ENCODE measurements at regions of chr16 and their contacts with region 1.

Region 1: DNA sequence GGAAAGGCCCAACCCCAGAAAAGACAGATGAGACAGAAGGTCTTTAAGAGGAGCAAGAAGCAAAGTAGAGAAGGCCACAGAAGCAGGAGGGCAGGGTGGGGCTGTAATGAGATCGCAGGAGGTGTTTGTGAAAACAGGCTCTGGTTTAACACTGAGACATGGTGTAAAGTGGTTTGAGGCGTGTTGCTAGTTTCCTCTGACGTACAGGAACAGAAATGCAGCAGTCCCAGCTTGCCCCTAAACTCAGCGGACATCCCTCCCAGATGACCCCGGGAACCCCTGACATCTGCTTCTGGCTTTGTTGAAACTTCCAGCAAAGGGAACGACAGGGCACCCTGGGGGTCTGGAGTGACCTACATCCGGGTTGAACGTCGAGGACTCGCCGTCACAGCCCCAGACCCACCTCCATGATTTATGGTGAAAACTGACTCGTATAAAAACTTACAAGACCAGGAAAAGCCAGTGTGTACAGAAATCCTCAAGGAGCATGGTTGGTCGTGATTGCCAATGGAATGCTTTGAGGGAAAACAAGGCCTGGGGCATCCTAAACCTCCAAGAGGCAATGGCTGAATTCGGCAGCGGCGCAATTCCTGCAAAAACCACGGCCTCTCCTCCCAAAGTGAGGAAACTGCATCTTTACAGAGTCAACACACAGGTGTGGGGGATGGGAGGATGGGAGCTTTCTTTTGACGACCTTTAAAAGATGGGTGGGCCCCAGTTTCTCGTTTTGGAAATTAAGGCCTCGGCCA is 25.8 kb downstream of the LITAF start:
- DNase-seq: peak; percentile 72 to 94
- ATAC-seq: peak; percentile 72 to 91 (median 80)
- H3K4me3 ChIP-seq: peak overlapping the region; percentile 68
- H3K4me3 Mint-ChIP-seq: peak overlapping the region; percentile 97
- H3K27ac ChIP-seq: peak overlapping the region; percentile 100
- H3K27ac Mint-ChIP-seq: peak overlapping the region; percentile 97 to 98
- H3K4me1 ChIP-seq: peaks cover 90% of the 10 kb centered on the region
- H3K4me1 Mint-ChIP-seq: peaks cover 71 to 76% of the 10 kb centered on the region in 2 donors
- H3K27me3 ChIP-seq: no peaks in the 10 kb centered on the region
- H3K27me3 Mint-ChIP-seq: no peaks in the 10 kb centered on the region
- CTCF ChIP-seq: no peak

Region 2: DNA sequence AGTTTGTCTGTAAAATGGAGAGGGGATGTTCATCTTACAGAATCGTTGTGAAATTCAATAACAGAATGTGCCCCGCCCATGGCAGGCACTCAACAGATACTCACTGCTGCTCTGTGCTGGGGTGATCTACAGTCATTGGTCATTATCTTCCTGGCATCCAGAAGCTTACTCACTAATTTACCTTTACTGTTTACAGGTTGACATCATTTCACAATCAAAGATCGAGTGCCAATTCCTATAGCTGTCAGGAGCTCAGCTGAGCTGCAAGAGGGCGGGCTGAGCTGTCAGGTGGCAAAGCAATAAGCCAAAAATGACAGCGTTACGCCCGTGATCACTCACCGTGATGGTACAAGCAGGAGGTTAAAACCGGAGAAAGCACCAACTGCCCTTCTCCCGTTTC is 25.4 kb before region 1 on chr16:
- intact Hi-C with region 1: loop called (anchors 1 kb)
- DNase-seq: no peak
- ATAC-seq: no peak
- H3K4me3 ChIP-seq: no peak overlapping the region
- H3K4me3 Mint-ChIP-seq: peak overlapping the region; percentile 50
- H3K27ac ChIP-seq: no peak overlapping the region
- H3K27ac Mint-ChIP-seq: peak overlapping the region in 1 of 2 donors; percentile 45
- H3K4me1 ChIP-seq: peaks cover 43% of the 10 kb centered on the region
- H3K4me1 Mint-ChIP-seq: peaks cover 45 to 46% of the 10 kb centered on the region in 2 donors
- H3K27me3 ChIP-seq: no peaks in the 10 kb centered on the region
- H3K27me3 Mint-ChIP-seq: peaks cover 8% of the 10 kb centered on the region in 2 donors
- CTCF ChIP-seq: no peak

Region 3: DNA sequence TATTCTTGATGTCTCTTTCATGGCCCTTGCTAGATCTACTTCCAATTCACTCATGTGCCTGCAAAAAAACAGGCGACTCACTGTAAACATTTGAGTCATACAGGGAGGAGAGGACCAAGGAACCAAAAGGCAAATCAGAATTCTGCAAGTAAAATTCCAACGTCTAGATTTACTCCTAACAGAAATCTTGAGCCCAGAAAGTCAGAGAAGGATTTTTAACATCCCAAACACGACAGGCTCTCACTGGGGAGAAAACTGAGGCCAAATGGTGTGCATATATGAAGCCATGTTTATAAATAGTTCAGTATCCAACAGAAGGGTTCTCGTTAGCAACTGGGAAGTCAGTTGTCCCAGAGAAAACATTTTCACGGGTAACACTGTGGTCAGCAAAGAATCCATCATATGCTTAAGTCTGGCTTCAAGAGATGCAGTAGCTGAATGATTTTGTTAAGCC is 14.2 kb before region 1 on chr16:
- intact Hi-C with region 1: no loop called
- DNase-seq: no peak
- ATAC-seq: no peak
- H3K4me3 ChIP-seq: no peak overlapping the region
- H3K4me3 Mint-ChIP-seq: peak overlapping the region; percentile 21
- H3K27ac ChIP-seq: no peak overlapping the region
- H3K27ac Mint-ChIP-seq: peak overlapping the region; percentile 64 to 86
- H3K4me1 ChIP-seq: peaks cover 3% of the 10 kb centered on the region
- H3K4me1 Mint-ChIP-seq: peaks cover 57 to 60% of the 10 kb centered on the region in 2 donors
- H3K27me3 ChIP-seq: no peaks in the 10 kb centered on the region
- H3K27me3 Mint-ChIP-seq: no peaks in the 10 kb centered on the region
- CTCF ChIP-seq: no peak

Region 4: DNA sequence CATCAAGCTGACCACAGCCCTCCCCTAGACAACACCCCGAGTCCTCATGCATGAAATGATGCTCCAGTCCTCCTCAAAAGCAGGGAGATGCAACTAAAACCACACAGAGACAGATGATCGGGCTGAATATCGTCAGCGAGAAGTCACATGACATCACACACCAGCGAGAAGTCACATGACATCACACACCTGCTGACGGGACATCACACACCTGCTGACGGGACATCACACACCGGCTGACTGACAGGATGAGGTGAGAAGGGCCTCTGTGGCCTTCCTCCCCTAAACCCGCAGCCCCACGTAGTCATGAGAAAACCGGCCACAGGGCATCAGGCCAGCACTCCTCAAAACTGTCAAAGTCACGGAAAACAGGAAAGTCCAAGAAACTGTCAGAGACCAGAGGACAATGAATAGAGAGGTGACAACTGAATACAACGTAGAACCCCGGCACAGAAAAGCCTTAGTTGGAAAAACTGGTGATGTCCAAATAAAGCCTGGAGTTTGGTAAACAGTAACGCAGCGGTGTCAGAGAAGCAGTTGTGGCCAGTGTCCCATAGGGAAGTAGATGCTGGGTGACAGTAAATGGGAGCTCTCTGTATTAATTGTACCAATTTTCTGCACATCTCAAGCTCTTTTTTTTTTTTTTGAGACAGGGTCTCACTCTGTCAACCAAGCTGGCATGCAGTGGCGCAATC is 11.6 kb after region 1 on chr16:
- intact Hi-C with region 1: loop called (anchors 1 kb)
- DNase-seq: peak; percentile 73 to 93
- ATAC-seq: peak; percentile 62 to 79 (median 76)
- H3K4me3 ChIP-seq: no peak overlapping the region
- H3K4me3 Mint-ChIP-seq: peak overlapping the region; percentile 88
- H3K27ac ChIP-seq: peak overlapping the region; percentile 42
- H3K27ac Mint-ChIP-seq: peak overlapping the region; percentile 97 to 98
- H3K4me1 ChIP-seq: peaks cover 99% of the 10 kb centered on the region
- H3K4me1 Mint-ChIP-seq: peaks cover 81 to 88% of the 10 kb centered on the region in 2 donors
- H3K27me3 ChIP-seq: no peaks in the 10 kb centered on the region
- H3K27me3 Mint-ChIP-seq: no peaks in the 10 kb centered on the region
- CTCF ChIP-seq: no peak

Region 5: GRCh38 chr16:11585460-11586377 is 24.8 kb after region 1 on chr16:
- intact Hi-C with region 1: loop called (anchors 1 kb)
- DNase-seq: peak; percentile 48 to 50
- ATAC-seq: peak in 2 of 3 donors; percentile 9 to 12
- H3K4me3 ChIP-seq: peak overlapping the region; percentile 62
- H3K4me3 Mint-ChIP-seq: peak overlapping the region; percentile 97
- H3K27ac ChIP-seq: peak overlapping the region; percentile 81
- H3K27ac Mint-ChIP-seq: peak overlapping the region; percentile 91 to 94
- H3K4me1 ChIP-seq: peaks cover 56% of the 10 kb centered on the region
- H3K4me1 Mint-ChIP-seq: peaks cover 56 to 63% of the 10 kb centered on the region in 2 donors
- H3K27me3 ChIP-seq: no peaks in the 10 kb centered on the region
- H3K27me3 Mint-ChIP-seq: no peaks in the 10 kb centered on the region
- CTCF ChIP-seq: no peak

Region 6: DNA sequence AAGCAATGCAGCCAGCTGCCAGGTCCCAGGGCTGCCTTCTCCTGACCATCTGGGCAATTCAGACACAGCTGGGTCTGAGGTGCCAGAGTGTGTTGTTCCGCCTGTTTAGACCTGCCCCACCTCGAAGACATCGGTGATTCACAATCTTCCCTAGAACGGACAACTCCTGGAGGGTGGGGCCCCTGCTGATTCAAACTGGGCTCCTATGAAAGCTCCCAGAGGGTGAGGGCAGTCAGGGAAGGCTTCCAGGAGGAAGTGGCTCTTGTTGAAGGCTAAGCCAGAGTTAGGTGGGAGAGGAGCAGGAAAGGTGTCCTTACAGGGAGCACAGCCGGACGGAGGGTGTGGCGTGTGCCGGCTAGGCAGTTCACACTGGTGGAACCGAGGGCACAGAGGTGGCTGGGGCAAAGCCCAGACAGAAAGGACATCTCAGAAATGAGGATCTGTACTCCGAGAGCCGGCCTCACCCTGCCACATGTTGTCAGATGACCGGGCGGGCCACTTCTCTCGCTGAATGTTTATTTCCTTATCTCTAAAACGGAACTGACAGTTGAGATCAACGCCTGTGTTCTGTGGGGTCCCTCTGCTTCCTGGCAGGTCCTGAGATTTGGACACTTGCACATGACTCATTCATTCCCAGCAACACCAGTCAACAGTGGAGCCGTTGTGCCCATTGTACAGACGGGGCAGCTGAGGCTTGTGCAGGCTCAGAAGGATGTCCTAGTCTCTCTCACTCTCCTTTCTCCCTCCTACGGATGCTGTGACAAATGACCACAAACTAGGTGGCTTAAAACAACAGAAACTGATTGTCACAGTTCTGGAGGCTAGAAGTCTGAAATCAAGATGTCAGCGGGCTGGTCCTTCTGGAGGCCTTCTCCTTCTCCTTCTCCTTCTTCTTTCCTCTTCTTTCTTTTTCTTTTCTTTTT is 52.8 kb after region 1 on chr16:
- intact Hi-C with region 1: loop called (anchors 2 kb)
- DNase-seq: peak; percentile 52 to 64
- ATAC-seq: peak; percentile 81 to 83 (median 82)
- H3K4me3 ChIP-seq: no peak overlapping the region
- H3K4me3 Mint-ChIP-seq: peak overlapping the region; percentile 81
- H3K27ac ChIP-seq: peak overlapping the region; percentile 73
- H3K27ac Mint-ChIP-seq: peak overlapping the region; percentile 95 to 96
- H3K4me1 ChIP-seq: peaks cover 48% of the 10 kb centered on the region
- H3K4me1 Mint-ChIP-seq: peaks cover 37 to 60% of the 10 kb centered on the region in 2 donors
- H3K27me3 ChIP-seq: no peaks in the 10 kb centered on the region
- H3K27me3 Mint-ChIP-seq: no peaks in the 10 kb centered on the region
- CTCF ChIP-seq: no peak

Region 7: GRCh38 chr16:11621920-11622651 is 61.2 kb after region 1 on chr16:
- intact Hi-C with region 1: loop called (anchors 2 kb)
- DNase-seq: peak; percentile 61 to 79
- ATAC-seq: peak; percentile 65 to 82 (median 80)
- H3K4me3 ChIP-seq: no peak overlapping the region
- H3K4me3 Mint-ChIP-seq: peak overlapping the region; percentile 93
- H3K27ac ChIP-seq: peak overlapping the region; percentile 70
- H3K27ac Mint-ChIP-seq: peak overlapping the region; percentile 93 to 97
- H3K4me1 ChIP-seq: peaks cover 78% of the 10 kb centered on the region
- H3K4me1 Mint-ChIP-seq: peaks cover 48 to 58% of the 10 kb centered on the region in 2 donors
- H3K27me3 ChIP-seq: no peaks in the 10 kb centered on the region
- H3K27me3 Mint-ChIP-seq: no peaks in the 10 kb centered on the region
- CTCF ChIP-seq: no peak